ENCODE measurements at regions of chr2 and their contacts with region 1.

Region 1: GRCh38 chr2:47388888-47389287 is 14.1 kb upstream of the MSH2 start:
- DNase-seq: no peak
- ATAC-seq: no peak

Region 2: GRCh38 chr2:47334356-47335136 is 54.3 kb before region 1 on chr2:
- intact Hi-C with region 1: loop called (anchors 1 kb)
- DNase-seq: no peak
- ATAC-seq: no peak